ENCODE measurements at regions of chr9 and their contacts with region 1.

Region 1: GRCh38 chr9:104144336-104144735 is 50.2 kb downstream of the SMC2 start:
- DNase-seq: no peak
- ATAC-seq: peak; percentile 25; the same call in 1 of the 3 replicates
- H3K4me3 ChIP-seq: no peak overlapping the region
- H3K27ac ChIP-seq: no peak overlapping the region
- H3K4me1 ChIP-seq: no peaks in the 10 kb centered on the region
- H3K27me3 ChIP-seq: no peaks in the 10 kb centered on the region
- CTCF ChIP-seq: no peak
- EP300 ChIP-seq: no peak
- POLR2A ChIP-seq: no peak
- RAD21 ChIP-seq: no peak

Region 2: DNA sequence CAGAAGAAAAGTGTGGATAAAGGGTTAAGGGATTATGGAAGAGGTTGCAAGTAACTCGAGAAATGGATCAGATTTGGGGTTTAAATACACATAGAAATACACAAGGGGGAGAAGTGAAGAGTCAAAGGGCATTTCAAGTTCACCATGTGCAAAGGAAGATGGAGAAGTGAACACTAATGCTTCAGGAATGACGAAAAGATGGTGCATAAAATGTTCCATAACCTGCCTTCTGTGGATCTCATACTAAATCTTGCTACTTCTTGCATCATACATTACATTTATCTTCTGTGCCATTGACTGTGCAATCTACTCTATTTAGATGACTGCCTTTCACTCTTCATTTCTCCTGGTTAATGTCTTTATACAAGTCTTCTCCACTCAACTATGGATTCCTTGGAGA is 55.9 kb before region 1 on chr9:
- CTCF ChIA-PET with region 1: no interaction called
- POLR2A ChIA-PET with region 1: no interaction called
- in situ Hi-C with region 1: no loop called
- intact Hi-C with region 1: loop called (anchors 10 kb)
- DNase-seq: no peak
- ATAC-seq: peak; percentile 31; the same call in 2 of the 3 replicates
- H3K4me3 ChIP-seq: no peak overlapping the region
- H3K27ac ChIP-seq: no peak overlapping the region
- H3K4me1 ChIP-seq: peaks cover 0 to 16% of the 10 kb centered on the region in 2 experiments; a peak in 3 of 5 replicates
- H3K27me3 ChIP-seq: no peaks in the 10 kb centered on the region
- CTCF ChIP-seq: no peak
- EP300 ChIP-seq: no peak; the same call in 1 of the 2 replicates
- POLR2A ChIP-seq: no peak
- RAD21 ChIP-seq: no peak

Region 3: DNA sequence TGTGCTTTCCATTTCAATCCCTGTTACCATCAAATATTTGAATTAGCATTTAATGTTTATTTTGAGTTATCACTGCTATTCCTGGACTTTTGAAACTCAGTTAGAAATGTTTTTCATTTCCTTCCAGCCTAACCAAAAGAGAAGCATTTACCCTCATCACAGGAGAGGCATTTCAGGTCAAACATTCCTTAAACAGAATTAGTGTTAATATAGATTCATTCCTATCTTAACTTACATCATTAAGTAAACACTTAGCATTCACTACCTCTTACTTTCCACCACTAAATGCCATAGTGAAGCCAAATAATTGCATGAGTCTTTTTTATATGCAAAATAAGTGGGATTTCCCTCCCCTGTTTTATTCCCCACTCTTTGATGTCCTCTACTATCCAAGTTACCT is 223.2 kb after region 1 on chr9:
- CTCF ChIA-PET with region 1: no interaction called
- POLR2A ChIA-PET with region 1: no interaction called
- in situ Hi-C with region 1: no loop called
- intact Hi-C with region 1: no loop called
- DNase-seq: no peak
- ATAC-seq: no peak
- H3K4me3 ChIP-seq: no peak overlapping the region
- H3K27ac ChIP-seq: no peak overlapping the region
- H3K4me1 ChIP-seq: no peaks in the 10 kb centered on the region
- H3K27me3 ChIP-seq: no peaks in the 10 kb centered on the region
- CTCF ChIP-seq: no peak
- EP300 ChIP-seq: no peak
- POLR2A ChIP-seq: no peak
- RAD21 ChIP-seq: no peak

Measured in K562 (cell line).